ENCODE measurements at regions of chr12 and their contacts with region 1.

Region 1: DNA sequence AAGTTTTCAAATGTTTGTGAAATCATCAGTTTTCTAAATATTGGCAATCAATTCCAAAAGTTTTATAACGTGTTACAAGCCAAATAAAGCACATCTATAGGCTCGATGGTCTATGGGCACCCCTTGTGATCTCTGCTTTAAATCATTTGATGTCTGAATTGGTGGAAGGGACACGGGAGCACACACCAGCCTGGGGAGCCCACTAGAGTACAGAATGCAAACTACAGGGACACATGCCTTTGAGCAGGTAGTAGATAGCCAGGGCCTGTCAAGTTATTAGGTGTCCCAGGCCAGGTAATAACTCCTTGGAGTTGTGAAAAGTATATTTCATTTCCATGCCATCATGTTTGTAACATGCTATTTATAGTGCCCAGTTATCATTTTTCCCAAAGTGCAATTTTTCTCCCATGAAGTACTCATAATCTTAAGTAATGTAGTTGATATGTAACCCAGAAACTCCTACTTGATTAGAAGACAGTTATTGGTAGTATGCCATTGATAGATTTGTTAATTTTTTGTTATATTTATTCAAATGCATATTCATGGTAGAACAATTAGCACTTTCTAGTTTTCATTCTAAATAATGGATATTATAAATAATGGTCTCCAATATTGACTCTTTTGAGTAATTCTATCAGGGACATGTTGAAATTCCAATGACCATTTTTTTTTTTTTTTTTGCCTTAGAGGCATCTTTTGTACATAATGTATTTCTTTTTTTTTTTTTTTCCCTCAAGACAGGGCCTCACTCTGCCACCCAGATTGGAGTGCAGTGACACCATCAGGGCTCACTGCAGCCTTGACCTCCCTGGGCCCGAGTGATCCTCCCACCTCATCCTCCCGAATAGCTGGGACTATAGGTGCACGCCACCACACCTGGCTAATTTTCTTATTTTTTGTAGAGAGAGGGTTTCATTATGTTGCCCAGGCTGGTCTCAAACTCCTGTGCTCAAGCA is 96.9 kb upstream of the FGD4 start:
- DNase-seq: no peak
- H3K4me3 ChIP-seq: no peak overlapping the region
- H3K27ac ChIP-seq: no peak overlapping the region
- H3K4me1 ChIP-seq: no peaks in the 10 kb centered on the region
- H3K27me3 ChIP-seq: no peaks in the 10 kb centered on the region
- CTCF ChIP-seq: peak in 1 of 3 experiments; percentile 32

Region 2: DNA sequence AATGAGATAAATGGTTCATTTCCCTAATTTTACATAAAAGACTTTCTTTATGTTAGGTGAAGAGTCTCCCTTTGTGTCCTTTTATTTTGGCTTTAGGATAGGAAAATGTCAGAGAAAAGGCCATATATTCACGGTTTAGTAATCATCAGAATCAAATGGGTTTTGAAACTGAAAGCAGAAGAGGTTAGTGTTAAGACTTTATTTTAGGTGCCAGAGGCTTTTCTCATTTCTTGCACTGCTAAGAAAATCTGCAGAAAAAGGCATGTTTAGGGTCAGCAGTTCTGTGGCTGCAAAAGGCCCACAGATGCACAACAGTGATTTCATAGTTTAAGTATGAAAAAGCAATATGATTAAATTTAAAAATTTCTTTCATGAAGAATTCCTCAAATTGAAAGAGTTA is 896.2 kb before region 1 on chr12:
- intact Hi-C with region 1: loop called (anchors 10 kb)
- DNase-seq: no peak
- H3K4me3 ChIP-seq: no peak overlapping the region
- H3K27ac ChIP-seq: no peak overlapping the region
- H3K4me1 ChIP-seq: no peaks in the 10 kb centered on the region
- H3K27me3 ChIP-seq: no peaks in the 10 kb centered on the region
- CTCF ChIP-seq: no peak

Region 3: DNA sequence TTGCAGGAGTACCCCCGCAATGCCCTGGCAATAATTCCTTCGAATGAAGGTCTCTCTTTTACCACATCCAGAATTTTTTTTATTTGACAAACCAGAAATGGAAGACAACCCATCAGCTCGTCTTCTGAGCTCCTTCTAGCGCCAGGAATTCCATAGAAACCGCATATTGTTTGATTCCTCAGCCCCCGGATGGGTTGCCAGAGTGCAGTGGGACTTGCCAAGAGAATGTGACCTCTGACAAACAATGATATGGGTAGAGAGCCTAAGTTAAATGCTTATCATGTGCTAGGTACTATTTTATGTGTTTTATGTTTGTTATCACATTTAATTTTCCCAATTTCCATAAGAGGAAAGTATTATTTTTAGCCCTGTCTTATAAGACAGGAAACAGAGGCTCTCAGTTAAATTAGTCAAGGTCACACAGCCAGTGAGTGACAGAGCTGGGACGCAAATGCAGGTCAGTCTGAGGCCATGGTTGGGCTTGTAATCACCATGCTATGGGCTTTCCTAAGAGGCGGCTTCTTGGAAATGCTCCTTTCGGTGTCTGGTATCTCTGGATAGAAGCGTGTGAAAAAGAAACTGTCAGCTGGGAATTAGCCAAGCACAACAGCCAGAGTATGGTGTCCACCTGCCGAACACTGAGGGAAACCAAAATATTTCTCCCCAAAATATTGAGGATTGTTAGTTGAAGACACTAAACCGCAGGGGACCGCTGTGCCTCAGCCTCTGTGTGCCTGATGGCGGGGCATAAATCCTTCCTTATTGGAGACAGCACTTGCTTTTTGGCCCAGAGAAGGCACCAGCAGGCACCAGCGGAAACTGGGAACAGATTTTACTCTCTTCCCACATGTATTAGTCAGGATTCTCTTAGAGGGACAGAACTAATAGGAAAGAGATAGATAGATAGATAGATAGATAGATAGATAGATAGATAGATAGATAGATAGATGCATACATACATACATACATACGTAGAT is 672.5 kb before region 1 on chr12:
- intact Hi-C with region 1: no loop called
- DNase-seq: no peak
- H3K4me3 ChIP-seq: no peak overlapping the region
- H3K27ac ChIP-seq: no peak overlapping the region
- H3K4me1 ChIP-seq: peaks cover 0 to 6% of the 10 kb centered on the region in 2 donors
- H3K27me3 ChIP-seq: no peaks in the 10 kb centered on the region
- CTCF ChIP-seq: no peak

Region 4: DNA sequence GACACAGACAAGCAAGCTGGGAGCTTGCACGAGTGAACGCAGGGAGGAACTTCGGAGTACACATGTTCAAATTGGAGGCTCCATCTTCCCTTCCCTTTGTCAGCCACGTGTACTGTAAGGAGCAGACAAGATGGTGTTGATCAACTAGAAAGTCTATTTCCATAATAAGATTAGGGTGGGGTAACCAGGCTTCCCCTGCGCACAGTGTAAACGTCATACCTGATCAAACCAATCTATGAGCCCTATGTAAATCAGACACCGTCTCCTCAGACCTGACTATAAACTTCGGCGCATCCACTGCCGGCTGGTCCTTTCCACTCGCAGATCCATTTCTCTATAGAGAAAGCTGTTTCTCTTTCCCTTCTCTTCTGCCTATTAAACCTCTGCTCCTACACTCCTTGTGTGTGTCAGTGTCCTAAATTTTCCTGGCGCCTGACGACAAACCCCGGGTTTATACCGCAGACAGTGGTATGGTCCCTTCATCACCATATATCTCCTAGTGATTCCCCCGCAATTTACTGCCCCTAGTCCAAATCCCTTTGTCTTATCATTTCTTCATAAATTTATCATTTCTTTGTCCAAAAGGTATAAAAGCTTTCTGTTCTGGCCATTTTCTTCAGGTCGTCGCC is 650.5 kb before region 1 on chr12:
- intact Hi-C with region 1: loop called (anchors 2 kb)
- DNase-seq: no peak
- H3K4me3 ChIP-seq: no peak overlapping the region
- H3K27ac ChIP-seq: no peak overlapping the region
- H3K4me1 ChIP-seq: no peaks in the 10 kb centered on the region
- H3K27me3 ChIP-seq: no peaks in the 10 kb centered on the region
- CTCF ChIP-seq: no peak

Region 5: GRCh38 chr12:32062881-32063280 is 239.6 kb before region 1 on chr12:
- intact Hi-C with region 1: loop called (anchors 5 kb)
- DNase-seq: no peak
- H3K4me3 ChIP-seq: no peak overlapping the region
- H3K27ac ChIP-seq: no peak overlapping the region
- H3K4me1 ChIP-seq: no peaks in the 10 kb centered on the region
- H3K27me3 ChIP-seq: no peaks in the 10 kb centered on the region
- CTCF ChIP-seq: no peak

Region 6: GRCh38 chr12:32390572-32391219 is 88.2 kb after region 1 on chr12:
- intact Hi-C with region 1: no loop called
- DNase-seq: no peak
- H3K4me3 ChIP-seq: peak overlapping the region; percentile 45 to 58
- H3K27ac ChIP-seq: no peak overlapping the region
- H3K4me1 ChIP-seq: no peaks in the 10 kb centered on the region
- H3K27me3 ChIP-seq: no peaks in the 10 kb centered on the region
- CTCF ChIP-seq: no peak

Region 7: DNA sequence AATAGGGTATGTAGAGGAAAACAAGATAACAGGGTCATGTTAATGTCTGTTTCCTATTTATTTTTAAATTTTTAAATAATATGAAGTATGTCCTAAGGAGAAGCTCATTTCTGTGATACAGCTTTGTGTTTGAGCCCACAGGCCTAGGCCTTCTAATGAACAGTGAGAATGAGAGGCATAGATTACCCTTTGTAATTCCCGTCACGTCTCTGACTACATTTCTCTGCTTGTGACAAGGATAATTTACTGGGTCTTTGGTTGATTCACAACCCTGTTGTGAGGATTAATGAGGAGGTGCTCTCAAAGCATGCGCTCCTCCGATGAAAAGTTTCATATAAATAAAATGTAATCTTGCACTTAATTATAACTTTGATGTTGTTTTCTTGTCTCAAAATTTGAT is 1081.0 kb after region 1 on chr12:
- intact Hi-C with region 1: no loop called
- DNase-seq: no peak
- H3K4me3 ChIP-seq: no peak overlapping the region
- H3K27ac ChIP-seq: no peak overlapping the region
- H3K4me1 ChIP-seq: no peaks in the 10 kb centered on the region
- H3K27me3 ChIP-seq: no peaks in the 10 kb centered on the region
- CTCF ChIP-seq: no peak

Measured in ascending aorta (tissue), 2 donors.